Heart right ventricle (tissue), 16 donors: ENCODE measurements at regions of chr4 and their contacts with region 1.

Region 1: GRCh38 chr4:125389713-125390112 is 75.0 kb downstream of the FAT4 start:
- DNase-seq: no peak
- ATAC-seq: peak in 7 of 8 donors; percentile 53 to 88 (median 82)
- H3K4me3 ChIP-seq: peak overlapping the region in 2 of 10 donors; percentile 1 to 21
- H3K27ac ChIP-seq: peak overlapping the region; percentile 6 to 85 (median 71)
- H3K4me1 ChIP-seq: peaks cover 0 to 64% (median 40%) of the 10 kb centered on the region in 9 donors
- H3K27me3 ChIP-seq: no peaks in the 10 kb centered on the region
- CTCF ChIP-seq: no peak

Region 2: DNA sequence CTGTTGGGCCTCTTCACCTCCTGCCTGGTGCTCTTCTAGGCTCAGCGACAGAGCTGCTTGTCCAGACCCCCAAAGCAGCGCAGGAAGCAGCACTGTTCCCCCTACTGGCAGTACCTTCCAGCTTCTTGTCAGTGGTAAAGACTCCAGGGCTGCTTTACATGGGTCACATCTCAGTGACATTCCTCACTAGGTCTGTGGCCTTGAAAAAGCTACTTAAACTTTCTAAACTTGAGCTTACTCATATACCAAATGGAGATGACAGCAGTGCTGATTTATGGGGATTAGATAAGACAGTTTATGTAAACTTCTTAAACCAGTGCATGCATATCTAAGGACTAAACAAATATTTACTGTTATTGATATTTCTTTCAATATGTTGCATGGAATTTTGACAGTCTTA is 42.4 kb after region 1 on chr4:
- intact Hi-C with region 1: loop called in 1 of 10 experiments (anchors 5 kb)
- DNase-seq: no peak
- ATAC-seq: peak in 6 of 8 donors; percentile 75 to 89 (median 80)
- H3K4me3 ChIP-seq: no peak overlapping the region
- H3K27ac ChIP-seq: peak overlapping the region in 1 of 10 donors; percentile 27
- H3K4me1 ChIP-seq: peaks cover 0 to 22% (median 10%) of the 10 kb centered on the region in 9 donors
- H3K27me3 ChIP-seq: no peaks in the 10 kb centered on the region
- CTCF ChIP-seq: peak in 8 of 9 donors; percentile 18 to 54 (median 41)